CD8-positive, alpha-beta T cell (primary cell): ENCODE measurements at regions of chr22 and their contacts with region 1.

Region 1: DNA sequence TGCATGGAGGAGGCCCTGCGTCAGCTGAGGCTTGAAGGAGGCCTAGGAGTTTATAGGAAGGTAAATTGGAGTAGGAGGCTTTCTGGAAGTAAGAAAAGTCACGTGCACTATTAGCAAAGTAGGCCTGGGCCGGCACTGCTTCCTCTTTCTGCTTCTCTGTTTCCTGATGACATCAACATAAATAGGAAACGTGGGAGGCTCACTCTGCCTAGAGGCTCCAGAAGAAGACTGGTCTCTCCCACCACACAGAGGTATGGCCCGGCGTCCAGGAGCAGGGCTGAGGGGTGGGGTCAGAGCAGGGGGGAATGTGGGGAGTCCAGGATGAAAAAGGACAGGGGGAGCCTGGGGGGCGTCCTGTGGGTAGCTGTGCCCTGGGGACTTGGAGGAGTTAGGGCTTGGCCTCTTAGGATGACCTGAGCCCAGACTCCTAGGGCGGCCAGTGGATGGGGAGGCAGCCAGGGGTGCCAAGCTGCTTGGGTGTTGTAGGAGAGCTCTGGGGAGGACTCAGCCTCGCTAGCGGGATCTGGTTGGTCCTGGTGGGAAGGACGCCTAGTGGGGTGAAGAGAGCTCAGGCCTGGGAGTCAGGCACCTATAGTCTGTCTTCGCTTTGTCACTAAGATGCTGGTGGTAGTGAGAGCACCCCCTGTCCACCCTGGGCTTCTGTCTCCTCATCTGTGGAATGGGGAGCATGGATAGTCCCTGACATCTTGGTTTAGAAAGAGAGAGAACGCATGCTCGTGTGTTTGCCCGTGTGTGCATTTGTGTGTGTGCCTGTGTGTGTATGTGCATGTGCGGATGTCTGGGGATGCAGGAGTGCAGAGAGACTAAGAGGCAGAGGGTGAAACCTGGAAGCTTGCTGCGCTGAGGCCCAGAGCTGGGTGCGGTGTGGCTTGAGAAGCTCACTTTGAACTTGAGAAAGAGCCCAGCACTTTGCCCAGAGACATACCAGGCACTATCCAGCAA is at the start of gene CSF2RB:
- DNase-seq: peak in 2 of 9 experiments; percentile 29 to 43
- ATAC-seq: no peak
- H3K4me3 ChIP-seq: no peak within 1 kb of the TSS
- H3K4me3 Mint-ChIP-seq: no peak within 1 kb of the TSS
- H3K27ac ChIP-seq: no peak within 1 kb of the TSS
- H3K27ac Mint-ChIP-seq: no peak within 1 kb of the TSS
- H3K4me1 ChIP-seq: no peaks in the 10 kb centered on the region
- H3K4me1 Mint-ChIP-seq: no peaks in the 10 kb centered on the region
- H3K27me3 ChIP-seq: no peaks in the 10 kb centered on the region
- H3K27me3 Mint-ChIP-seq: peaks cover 23% of the 10 kb centered on the region
- CTCF ChIP-seq: no peak
- total RNA-seq, gene CSF2RB: 0.14 to 0.17 TPM

Region 2: DNA sequence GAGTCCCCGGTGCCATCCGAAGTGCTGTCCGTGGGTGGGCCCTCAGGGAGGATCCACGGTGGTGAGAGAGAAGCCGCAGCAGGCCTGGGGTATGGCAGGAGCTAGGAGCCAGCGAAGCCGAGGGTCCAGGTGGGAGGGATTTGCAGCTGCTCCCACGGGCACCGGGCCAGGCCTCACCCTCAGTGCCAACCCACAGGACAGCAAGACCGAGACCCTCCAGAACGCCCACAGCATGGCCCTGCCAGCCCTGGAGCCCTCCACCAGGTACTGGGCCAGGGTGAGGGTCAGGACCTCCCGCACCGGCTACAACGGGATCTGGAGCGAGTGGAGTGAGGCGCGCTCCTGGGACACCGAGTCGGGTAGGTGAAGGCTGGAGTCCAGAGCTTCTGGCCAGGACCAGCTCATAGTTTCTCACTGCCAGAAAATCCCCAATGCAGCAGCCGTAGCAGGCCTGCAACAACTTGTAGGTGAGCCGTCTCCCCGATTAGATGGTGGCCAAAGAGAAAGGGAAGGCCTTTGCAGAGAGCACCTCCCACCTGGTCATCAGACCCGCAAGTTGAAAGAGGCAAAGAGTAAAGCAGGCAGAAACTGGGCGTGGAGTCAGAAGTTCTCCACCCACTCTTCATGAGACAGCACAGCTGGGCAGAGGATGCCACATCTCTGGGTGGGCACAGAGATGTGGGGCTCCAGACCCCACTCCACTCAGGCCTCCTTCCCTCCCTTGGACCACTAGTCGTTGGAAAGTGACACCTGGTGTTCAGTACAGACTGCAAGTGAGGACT is 20.1 kb after region 1 on chr22:
- CTCF ChIA-PET with region 1: no interaction called
- POLR2A ChIA-PET with region 1: no interaction called
- intact Hi-C with region 1: loop called in 1 of 2 experiments (anchors 1 kb)
- DNase-seq: no peak
- ATAC-seq: no peak
- H3K4me3 ChIP-seq: no peak overlapping the region
- H3K4me3 Mint-ChIP-seq: no peak overlapping the region
- H3K27ac ChIP-seq: no peak overlapping the region
- H3K27ac Mint-ChIP-seq: no peak overlapping the region
- H3K4me1 ChIP-seq: no peaks in the 10 kb centered on the region
- H3K4me1 Mint-ChIP-seq: no peaks in the 10 kb centered on the region
- H3K27me3 ChIP-seq: no peaks in the 10 kb centered on the region
- H3K27me3 Mint-ChIP-seq: peaks cover 5% of the 10 kb centered on the region
- CTCF ChIP-seq: no peak

Region 3: GRCh38 chr22:37229805-37230672 is 316.3 kb after region 1 on chr22:
- CTCF ChIA-PET with region 1: no interaction called
- POLR2A ChIA-PET with region 1: no interaction called
- intact Hi-C with region 1: no loop called
- DNase-seq: peak; percentile 80 to 97 (median 91)
- ATAC-seq: peak; percentile 68
- H3K4me3 ChIP-seq: peak overlapping the region; percentile 36 to 52
- H3K4me3 Mint-ChIP-seq: peak overlapping the region; percentile 80
- H3K27ac ChIP-seq: peak overlapping the region; percentile 75 to 92
- H3K27ac Mint-ChIP-seq: peak overlapping the region; percentile 100
- H3K4me1 ChIP-seq: peaks cover 94% of the 10 kb centered on the region
- H3K4me1 Mint-ChIP-seq: peaks cover 91% of the 10 kb centered on the region
- H3K27me3 ChIP-seq: no peaks in the 10 kb centered on the region
- H3K27me3 Mint-ChIP-seq: no peaks in the 10 kb centered on the region
- CTCF ChIP-seq: no peak